ENCODE measurements at regions of chr22 and their contacts with region 1.

Region 1: DNA sequence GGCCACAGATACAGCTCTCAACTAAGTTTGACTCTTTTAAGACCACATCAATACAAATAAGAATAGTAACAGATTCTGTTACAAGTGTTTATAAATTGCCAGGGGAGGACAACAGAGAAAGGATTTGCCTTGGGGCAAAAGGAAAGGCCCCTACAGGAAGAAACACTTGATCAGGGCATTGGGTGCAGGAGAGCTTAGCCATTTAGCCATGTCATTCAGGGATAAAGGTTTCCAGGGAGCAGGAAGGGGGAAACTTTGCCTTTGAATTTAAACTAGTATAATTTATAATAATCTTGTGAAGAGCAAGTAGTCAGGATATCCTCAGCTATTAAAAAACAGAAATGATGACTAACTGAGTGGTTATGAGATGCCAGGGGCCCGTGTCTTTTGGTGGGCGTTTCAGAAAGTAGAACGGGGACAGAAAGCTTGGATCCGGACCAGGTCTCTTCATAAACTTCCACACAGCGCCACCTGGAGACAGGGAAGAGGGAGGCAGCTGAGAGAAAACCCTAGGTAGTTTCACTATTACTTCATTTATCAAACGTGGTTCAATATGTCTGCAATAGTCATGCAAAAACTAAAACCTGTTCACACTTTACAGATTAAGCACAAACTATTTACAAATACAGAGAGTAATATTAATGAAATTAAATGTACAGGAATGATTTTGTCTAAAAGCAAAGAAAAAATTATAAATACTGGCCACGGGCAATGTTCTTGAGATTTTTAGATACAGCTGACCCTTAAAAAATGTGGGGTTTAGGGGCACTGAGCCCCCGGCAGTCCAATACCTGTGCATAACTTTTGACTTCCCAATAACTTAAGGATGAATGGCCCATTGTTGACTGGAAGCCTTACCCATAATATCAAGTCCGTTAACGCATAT is 11.0 kb upstream of the SLC5A4 start:
- DNase-seq: peak; percentile 69
- ATAC-seq: peak; percentile 71

Region 2: DNA sequence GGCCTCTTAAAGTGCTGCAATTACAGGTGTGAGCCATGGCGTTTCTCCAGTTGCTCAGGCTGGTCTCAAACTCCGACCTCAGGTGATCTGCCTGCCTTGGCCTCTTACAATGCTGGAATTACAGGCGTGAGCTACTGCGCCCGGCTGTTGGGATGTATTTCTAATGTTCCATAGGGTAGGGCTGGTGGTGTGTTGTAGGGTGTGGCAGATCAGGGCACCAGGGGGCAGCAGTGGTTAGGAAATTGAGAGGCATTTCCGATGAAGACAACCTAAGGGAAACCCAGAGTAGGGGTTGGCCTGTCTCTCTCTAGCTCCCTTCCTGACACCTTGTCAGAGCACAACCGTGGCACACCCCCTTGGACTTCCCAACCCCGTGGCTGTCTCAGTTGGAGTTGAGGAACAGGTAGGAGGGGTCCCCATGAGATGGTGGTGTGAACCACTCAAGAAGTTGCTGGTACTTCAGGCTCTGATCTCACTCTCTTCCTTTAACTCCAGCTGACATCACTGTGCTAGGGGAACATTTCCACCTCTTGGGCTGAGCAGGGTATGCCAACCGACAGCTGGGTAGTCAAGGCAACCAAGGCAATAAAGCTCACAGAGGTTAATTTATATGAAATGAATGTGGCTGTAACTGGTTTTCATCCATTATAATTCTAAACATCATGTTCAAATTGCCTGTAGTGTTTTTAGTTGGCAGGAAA is 288.8 kb before region 1 on chr22:
- intact Hi-C with region 1: loop called (anchors 5 kb)
- DNase-seq: peak; percentile 85
- ATAC-seq: peak; percentile 91

Region 3: DNA sequence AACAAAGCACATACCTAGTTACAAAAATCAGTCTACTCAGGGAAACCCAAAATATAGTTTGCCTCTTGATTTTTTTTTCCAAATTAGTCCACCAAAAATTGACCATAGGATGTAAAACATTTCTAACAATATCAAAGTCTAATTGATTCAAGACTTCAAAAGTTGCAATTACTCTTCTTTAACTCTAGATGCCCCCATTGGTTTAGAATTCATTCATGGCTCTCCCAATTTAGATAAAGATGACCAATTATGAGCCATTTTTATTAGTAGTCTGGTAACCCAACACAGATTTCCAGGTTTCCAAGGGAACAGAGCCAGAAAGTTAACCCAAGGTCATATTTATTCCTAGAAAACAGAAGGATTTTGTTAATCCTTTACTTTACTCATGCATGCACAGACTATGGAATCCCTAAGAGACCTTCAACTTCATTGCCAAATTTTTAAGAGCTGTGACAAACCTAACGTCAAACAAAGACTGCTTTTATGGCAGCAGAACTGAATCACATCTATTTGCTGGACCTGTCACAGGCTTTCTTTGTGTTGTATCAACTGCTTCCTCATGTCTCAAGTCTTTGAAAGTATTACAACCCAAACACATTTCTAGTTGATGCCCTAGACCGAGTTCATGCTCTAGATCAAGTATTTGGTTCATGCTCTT is 162.3 kb before region 1 on chr22:
- intact Hi-C with region 1: loop called (anchors 10 kb)
- DNase-seq: no peak
- ATAC-seq: no peak

Measured in Right ventricle myocardium superior (tissue), 1 donor.